HepG2 (cell line): ENCODE measurements at regions of chr1 and their contacts with region 1.

Region 1: GRCh38 chr1:32400876-32401631 is 6.8 kb upstream of the BSDC1 start:
- DNase-seq: peak; percentile 66
- ATAC-seq: peak; percentile 97
- H3K4me3 ChIP-seq: peak overlapping the region; percentile 22 to 62 (median 46); a peak in 4 of 6 replicates
- H3K27ac ChIP-seq: no peak overlapping the region
- H3K4me1 ChIP-seq: peaks cover 13% of the 10 kb centered on the region
- H3K27me3 ChIP-seq: 0 out of 5 replicates have a peak, but pooled peaks cover 0 to 2% of the 10 kb centered on the region in 2 experiments
- CTCF ChIP-seq: peak; percentile 89
- EP300 ChIP-seq: no peak
- POLR2A ChIP-seq: no peak
- RAD21 ChIP-seq: peak; percentile 85

Region 2: DNA sequence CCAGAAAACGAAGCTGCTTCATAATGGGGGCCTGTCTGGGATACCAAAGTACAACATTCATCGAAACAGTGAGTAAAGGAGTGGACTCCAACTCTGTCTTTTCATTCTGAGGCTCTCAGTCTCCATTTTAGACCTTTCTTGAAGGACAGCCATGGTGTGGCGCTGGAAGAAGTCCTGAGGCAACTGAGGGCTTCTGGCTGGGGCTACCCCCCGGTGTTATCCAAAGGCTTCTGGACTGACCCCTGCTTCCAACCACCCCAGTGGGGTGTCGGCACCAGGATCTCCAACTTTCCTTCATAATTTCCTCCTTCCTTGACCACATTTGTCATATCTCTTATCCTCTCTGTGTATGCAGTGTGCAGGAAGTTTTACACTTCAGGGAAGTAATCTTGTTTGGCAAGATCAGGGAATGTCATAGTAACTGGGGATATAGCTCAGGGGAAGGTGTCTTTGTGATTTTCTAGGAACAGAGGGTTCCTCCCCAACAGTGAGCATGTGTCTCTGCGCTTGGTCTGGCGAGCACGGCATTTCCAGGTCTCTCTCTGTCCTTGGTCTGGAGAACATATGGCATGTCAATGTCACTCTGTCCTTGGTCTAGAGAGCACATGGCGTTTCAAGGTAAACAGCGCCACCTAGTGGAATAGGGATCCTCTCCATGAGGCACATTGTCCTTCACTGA is 12.6 kb after region 1 on chr1:
- CTCF ChIA-PET with region 1: interaction called, 39 read pairs
- POLR2A ChIA-PET with region 1: interaction called, 3 read pairs
- in situ Hi-C with region 1: no loop called
- intact Hi-C with region 1: loop called (anchors 1 kb)
- DNase-seq: peak; percentile 83
- ATAC-seq: peak; percentile 98
- H3K4me3 ChIP-seq: peak overlapping the region in 1 of 3 experiments; percentile 31; a peak in 2 of 6 replicates
- H3K27ac ChIP-seq: no peak overlapping the region
- H3K4me1 ChIP-seq: peaks cover 25% of the 10 kb centered on the region
- H3K27me3 ChIP-seq: peaks cover 2 to 5% of the 10 kb centered on the region in 2 experiments; a peak in 2 of 5 replicates
- CTCF ChIP-seq: peak; percentile 96
- EP300 ChIP-seq: no peak
- POLR2A ChIP-seq: no peak
- RAD21 ChIP-seq: peak; percentile 89

Region 3: DNA sequence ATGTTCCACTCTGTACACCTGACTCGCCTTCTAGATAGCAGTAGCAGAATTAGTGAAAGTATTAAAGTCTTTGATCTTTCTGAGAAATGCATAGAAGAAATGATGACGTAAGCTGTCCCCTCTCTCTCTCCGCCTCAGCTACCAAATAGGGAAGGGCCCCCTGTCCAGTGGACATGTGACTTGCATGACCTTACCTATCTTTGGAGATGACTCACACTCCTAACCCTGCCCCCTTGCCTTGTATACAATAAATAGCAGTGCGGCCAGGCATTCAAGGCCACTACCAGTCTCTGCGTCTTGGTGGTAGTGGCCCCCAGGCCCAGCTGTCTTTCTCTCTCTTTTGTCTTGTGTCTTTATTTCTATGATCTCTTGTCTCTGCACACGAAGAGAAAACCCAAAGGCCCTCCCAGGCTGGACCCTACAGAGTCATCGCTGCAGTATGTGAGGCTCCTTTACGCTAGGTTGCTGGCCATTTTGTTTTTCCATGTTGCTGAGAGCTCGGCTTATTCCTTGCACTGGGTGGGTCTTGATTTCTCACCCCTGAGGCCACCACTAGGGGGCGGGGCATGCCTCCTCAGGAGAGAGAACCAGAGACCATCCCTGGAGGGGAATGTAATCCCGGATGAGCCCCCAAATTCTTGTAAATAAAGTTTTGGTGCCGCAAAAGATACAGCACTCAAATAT is 47.9 kb after region 1 on chr1:
- CTCF ChIA-PET with region 1: interaction called, 3 read pairs
- POLR2A ChIA-PET with region 1: interaction called, 3 read pairs
- in situ Hi-C with region 1: no loop called
- intact Hi-C with region 1: loop called (anchors 5 kb)
- DNase-seq: peak; percentile 75
- ATAC-seq: peak; percentile 96
- H3K4me3 ChIP-seq: peak overlapping the region; percentile 54 to 69 (median 61)
- H3K27ac ChIP-seq: peak overlapping the region; percentile 64
- H3K4me1 ChIP-seq: peaks cover 26% of the 10 kb centered on the region
- H3K27me3 ChIP-seq: peaks cover 0 to 8% of the 10 kb centered on the region in 2 experiments; a peak in 2 of 5 replicates
- CTCF ChIP-seq: peak; percentile 74
- EP300 ChIP-seq: no peak
- POLR2A ChIP-seq: peak; percentile 53 to 65; a peak in 3 of 4 replicates
- RAD21 ChIP-seq: no peak